Activated CD4-positive, alpha-beta memory T cell treated with anti-CD3 and anti-CD28 coated beads for 36 hours (primary cell): ENCODE measurements at regions of chr10 and their contacts with region 1.

Region 1: GRCh38 chr10:12729885-12730284 is 271.6 kb downstream of the CCDC3 start:
- DNase-seq: peak; percentile 34
- H3K4me3 Mint-ChIP-seq: no peak overlapping the region
- H3K27ac Mint-ChIP-seq: no peak overlapping the region
- H3K4me1 Mint-ChIP-seq: peaks cover 21% of the 10 kb centered on the region
- H3K27me3 Mint-ChIP-seq: no peaks in the 10 kb centered on the region

Region 2: DNA sequence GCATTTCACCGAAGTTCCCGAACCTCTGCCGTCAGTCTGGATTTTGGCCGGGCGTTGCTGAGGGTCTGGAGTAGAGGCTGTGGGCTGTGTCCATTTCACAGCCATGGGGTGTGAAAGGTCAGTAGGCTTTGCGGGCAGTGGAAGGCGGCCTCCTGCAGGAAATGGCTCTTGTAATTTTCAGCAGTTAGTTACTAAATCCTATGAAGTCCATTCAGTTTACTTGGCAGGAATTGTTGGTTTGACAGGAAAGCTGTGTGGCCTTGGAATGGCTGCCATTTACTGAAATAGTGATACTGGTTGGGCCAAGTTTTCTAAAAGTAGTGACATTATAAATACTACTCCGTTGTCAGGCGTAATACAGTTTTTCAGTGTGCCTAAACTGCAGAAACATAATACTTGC is 32.1 kb before region 1 on chr10:
- CTCF ChIA-PET with region 1: no interaction called
- POLR2A ChIA-PET with region 1: no interaction called
- intact Hi-C with region 1: no loop called
- DNase-seq: no peak
- H3K4me3 Mint-ChIP-seq: no peak overlapping the region
- H3K27ac Mint-ChIP-seq: no peak overlapping the region
- H3K4me1 Mint-ChIP-seq: peaks cover 36% of the 10 kb centered on the region
- H3K27me3 Mint-ChIP-seq: no peaks in the 10 kb centered on the region

Region 3: GRCh38 chr10:12902135-12902572 is 172.3 kb after region 1 on chr10:
- CTCF ChIA-PET with region 1: interaction called, 5 read pairs
- POLR2A ChIA-PET with region 1: no interaction called
- intact Hi-C with region 1: loop called (anchors 5 kb)
- DNase-seq: peak; percentile 57
- H3K4me3 Mint-ChIP-seq: no peak overlapping the region
- H3K27ac Mint-ChIP-seq: no peak overlapping the region
- H3K4me1 Mint-ChIP-seq: no peaks in the 10 kb centered on the region
- H3K27me3 Mint-ChIP-seq: peaks cover 16% of the 10 kb centered on the region

Region 4: GRCh38 chr10:13087986-13088618 is 358.2 kb after region 1 on chr10:
- CTCF ChIA-PET with region 1: no interaction called
- POLR2A ChIA-PET with region 1: no interaction called
- intact Hi-C with region 1: loop called (anchors 5 kb)
- DNase-seq: peak; percentile 39
- H3K4me3 Mint-ChIP-seq: no peak overlapping the region
- H3K27ac Mint-ChIP-seq: peak overlapping the region; percentile 15
- H3K4me1 Mint-ChIP-seq: peaks cover 14% of the 10 kb centered on the region
- H3K27me3 Mint-ChIP-seq: peaks cover 6% of the 10 kb centered on the region